ENCODE measurements at regions of chr5 and their contacts with region 1.

Region 1: DNA sequence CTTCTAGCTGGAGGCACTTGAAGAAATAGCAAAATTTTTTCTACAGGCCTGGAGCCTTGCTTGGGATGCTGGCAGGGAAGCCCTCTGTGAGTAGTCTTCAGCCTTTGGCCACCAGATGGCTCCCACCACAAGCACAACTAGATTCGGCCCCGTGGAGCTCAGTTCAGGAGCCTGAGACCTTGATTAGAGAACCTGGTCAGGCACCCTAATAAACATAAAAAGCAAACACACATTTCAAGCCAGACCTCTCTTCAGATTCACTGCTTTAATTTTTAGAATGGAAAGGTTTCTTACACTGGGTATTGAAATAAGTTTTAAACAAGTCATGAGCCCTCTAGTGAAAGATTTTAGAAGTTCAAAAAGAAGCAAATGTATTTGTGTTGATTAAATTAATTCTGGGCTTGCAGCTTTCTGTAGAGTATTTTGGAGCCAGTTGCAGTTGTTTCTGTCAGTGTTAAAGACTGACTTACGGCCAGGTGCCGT is 41.4 kb downstream of the GLRX start:
- DNase-seq: peak; percentile 86
- H3K4me3 Mint-ChIP-seq: peak overlapping the region; percentile 44
- H3K27ac Mint-ChIP-seq: peak overlapping the region; percentile 48
- H3K4me1 Mint-ChIP-seq: peaks cover 3% of the 10 kb centered on the region
- H3K27me3 Mint-ChIP-seq: no peaks in the 10 kb centered on the region

Region 2: GRCh38 chr5:95327211-95327610 is 453.9 kb before region 1 on chr5:
- CTCF ChIA-PET with region 1: no interaction called
- intact Hi-C with region 1: no loop called
- DNase-seq: no peak
- H3K4me3 Mint-ChIP-seq: no peak overlapping the region
- H3K27ac Mint-ChIP-seq: no peak overlapping the region
- H3K4me1 Mint-ChIP-seq: no peaks in the 10 kb centered on the region
- H3K27me3 Mint-ChIP-seq: peaks cover 3% of the 10 kb centered on the region

Region 3: DNA sequence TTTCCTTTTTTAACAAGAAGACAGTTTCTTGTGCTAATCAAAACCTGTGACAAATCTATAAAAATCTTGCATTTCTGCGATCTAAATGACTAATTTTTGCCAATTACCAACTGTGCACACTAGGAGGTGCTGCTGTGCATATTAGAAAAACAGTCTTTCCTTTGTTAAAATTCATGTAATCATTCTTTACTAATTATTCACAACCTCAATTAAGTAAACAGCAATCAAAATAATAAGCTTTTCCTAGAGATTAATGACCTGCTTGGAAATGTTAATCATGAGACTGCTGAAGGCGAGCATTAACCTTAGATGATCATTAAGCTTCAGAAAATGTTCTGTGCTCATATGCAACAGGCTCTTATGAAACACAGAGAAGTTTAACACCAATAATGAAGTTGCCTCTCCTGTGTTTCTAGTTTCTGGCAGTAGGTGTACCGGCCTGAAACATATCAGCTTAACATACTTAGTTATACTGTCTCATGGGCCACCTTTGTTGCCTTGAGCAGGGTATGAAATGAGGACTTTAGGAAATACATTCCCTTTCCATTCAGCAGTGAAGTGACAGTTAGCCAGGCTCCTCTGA is 116.8 kb before region 1 on chr5:
- CTCF ChIA-PET with region 1: interaction called, 25 read pairs
- intact Hi-C with region 1: loop called (anchors 1 kb)
- DNase-seq: peak; percentile 63
- H3K4me3 Mint-ChIP-seq: no peak overlapping the region
- H3K27ac Mint-ChIP-seq: no peak overlapping the region
- H3K4me1 Mint-ChIP-seq: no peaks in the 10 kb centered on the region
- H3K27me3 Mint-ChIP-seq: no peaks in the 10 kb centered on the region

Region 4: GRCh38 chr5:95803284-95804148 is 22.4 kb after region 1 on chr5:
- CTCF ChIA-PET with region 1: interaction called, 33 read pairs
- intact Hi-C with region 1: loop called (anchors 1 kb)
- DNase-seq: no peak
- H3K4me3 Mint-ChIP-seq: no peak overlapping the region
- H3K27ac Mint-ChIP-seq: no peak overlapping the region
- H3K4me1 Mint-ChIP-seq: peaks cover 8% of the 10 kb centered on the region
- H3K27me3 Mint-ChIP-seq: no peaks in the 10 kb centered on the region

Region 5: DNA sequence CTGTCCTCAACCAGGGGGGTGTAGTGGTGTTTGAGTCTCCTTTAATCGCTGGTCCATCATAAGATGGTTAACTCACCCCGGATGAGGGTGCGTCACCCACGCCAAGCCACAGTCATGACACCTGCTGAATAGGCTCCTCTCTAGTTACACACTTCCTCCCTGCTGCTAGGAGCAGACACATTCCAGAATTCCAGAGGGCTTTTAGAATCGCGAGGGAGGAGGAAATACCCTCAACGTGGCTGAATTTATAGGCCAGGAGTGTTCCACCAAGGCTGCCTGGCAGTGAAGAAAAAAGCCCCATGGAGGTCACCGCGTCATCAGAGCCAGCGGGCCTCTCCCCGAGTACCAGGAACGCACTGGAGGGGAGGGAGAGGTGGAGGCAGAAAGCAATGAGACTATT is 36.3 kb after region 1 on chr5:
- CTCF ChIA-PET with region 1: interaction called, 48 read pairs
- intact Hi-C with region 1: loop called (anchors 1 kb)
- DNase-seq: peak; percentile 61
- H3K4me3 Mint-ChIP-seq: peak overlapping the region; percentile 77
- H3K27ac Mint-ChIP-seq: peak overlapping the region; percentile 91
- H3K4me1 Mint-ChIP-seq: peaks cover 69% of the 10 kb centered on the region
- H3K27me3 Mint-ChIP-seq: no peaks in the 10 kb centered on the region

Region 6: DNA sequence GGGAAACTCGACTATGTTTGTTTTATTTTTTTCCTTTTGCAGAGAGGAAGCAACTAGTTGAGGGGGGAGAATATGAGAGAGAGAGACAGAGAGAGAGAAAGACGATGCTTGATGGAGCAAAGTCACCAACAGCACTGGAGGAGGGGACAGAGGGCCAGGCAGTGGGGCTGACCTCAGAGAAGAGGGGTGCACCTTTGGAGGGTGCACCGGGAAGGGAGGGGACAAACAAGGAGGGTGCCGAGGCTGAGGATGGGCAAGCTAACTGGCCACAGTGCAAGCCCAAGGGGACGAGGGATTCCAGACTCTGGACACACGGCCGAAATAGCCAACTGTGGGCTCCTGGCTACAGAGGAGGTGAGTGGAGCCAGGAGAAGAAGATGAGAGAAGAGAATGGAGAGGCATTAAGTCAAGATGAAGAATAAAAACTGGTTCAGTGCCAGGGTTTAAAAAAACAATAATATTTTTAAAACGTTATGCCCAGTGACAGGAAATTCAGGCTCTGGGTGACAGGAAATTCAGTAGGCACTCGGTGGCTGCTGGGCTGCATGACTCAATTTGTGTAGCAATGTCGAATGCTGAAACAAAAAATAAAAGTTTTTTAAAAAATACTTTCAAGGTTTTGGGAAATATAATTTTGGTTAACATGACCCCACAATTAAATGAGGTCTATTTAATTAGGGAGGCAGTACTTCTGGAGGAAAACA is 54.7 kb after region 1 on chr5:
- CTCF ChIA-PET with region 1: interaction called, 497 read pairs
- intact Hi-C with region 1: no loop called
- DNase-seq: peak; percentile 57
- H3K4me3 Mint-ChIP-seq: peak overlapping the region; percentile 77
- H3K27ac Mint-ChIP-seq: peak overlapping the region; percentile 92
- H3K4me1 Mint-ChIP-seq: peaks cover 47% of the 10 kb centered on the region
- H3K27me3 Mint-ChIP-seq: no peaks in the 10 kb centered on the region

Region 7: DNA sequence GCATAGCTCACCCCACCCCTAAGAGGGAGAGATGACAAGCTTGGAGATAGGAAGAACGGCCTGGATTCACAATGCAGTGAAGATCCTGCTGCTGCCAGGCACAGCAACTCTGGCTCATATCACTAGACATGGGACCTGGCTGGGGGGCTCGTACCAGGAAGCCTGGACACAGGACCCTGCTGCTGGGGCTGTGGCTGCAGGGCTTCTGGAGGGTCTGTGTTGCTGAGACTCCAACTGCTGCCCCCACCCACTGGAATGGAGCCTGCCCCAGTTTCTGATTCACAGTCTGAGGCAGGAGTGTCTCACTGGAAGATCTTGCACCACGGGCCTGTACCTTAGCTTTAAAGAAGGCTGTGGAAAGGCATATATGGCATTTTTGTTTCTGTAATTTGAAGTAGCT is 72.3 kb after region 1 on chr5:
- CTCF ChIA-PET with region 1: interaction called, 497 read pairs
- intact Hi-C with region 1: no loop called
- DNase-seq: no peak
- H3K4me3 Mint-ChIP-seq: no peak overlapping the region
- H3K27ac Mint-ChIP-seq: no peak overlapping the region
- H3K4me1 Mint-ChIP-seq: peaks cover 7% of the 10 kb centered on the region
- H3K27me3 Mint-ChIP-seq: no peaks in the 10 kb centered on the region

Region 8: DNA sequence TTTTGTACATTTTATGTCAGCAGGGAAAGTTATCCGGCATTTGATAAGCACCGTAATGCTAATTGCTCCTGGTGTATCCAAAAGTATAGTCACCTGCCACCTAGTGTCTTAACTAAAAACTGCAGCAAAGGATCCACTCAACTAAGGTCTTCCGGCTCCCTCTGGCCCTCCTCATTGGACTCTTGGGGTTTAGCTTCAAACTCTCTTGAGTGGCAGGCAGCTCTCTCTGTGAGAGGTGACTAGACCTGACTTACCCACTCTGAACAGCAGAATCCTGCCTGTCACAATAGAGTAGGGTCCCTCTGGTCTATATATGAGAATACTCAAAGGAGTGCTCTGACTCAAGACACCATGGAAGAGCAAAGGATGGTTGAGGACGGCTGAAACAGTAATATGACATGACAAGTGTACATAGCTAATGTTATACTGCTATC is 820.7 kb after region 1 on chr5:
- CTCF ChIA-PET with region 1: interaction called, 3 read pairs
- intact Hi-C with region 1: loop called (anchors 5 kb)
- DNase-seq: peak; percentile 68
- H3K4me3 Mint-ChIP-seq: no peak overlapping the region
- H3K27ac Mint-ChIP-seq: no peak overlapping the region
- H3K4me1 Mint-ChIP-seq: peaks cover 10% of the 10 kb centered on the region
- H3K27me3 Mint-ChIP-seq: peaks cover 5% of the 10 kb centered on the region